Tibial artery (tissue), 4 donors: ENCODE measurements at regions of chr5 and their contacts with region 1.

Region 1: DNA sequence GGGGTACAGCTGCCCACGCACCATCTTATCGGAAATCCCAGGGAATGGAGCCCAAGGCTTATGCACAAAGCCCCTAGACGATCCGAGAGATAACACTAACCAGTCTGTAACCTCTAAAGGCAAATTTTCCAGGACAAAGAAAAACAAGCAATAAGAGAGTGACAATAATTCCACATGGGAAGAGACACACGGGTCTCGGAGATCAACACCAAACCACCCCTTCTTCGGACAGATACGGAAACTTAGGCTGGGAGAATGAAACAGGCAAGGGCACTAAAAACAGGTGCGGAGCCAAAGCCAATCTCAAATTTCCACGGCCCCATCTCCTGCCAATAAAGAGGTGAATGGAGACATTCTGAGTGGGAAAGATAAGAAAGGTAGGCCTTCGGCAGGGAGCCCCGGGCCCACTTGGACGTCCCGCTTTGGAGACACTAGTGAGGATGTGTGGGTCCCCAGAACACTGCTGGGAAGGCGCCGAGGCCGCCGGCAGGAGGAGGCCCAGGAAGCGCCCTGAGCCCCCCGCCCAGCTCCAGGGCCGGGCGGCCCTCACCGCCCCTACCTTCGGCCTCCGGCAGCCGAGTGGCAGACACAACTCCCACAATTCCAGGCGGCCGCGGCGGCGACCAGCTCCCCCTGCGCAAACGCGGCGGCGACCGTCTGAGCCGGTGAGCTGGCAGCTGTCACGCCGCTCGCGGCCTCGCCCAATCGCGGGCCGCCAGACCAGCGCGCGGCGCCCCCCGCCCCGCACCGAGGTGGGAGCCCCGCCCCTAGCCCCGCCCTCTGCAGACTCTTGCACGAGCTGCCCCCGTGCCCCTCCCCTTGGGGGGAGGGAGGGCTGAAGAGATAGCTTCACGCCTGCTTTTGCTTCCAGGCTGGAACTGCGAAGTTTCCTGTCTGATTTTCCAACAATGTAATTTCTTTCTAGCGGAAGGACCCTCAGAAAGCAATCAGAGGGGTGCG is at the start of gene SIL1:
- DNase-seq: peak; percentile 95 to 99
- H3K4me3 ChIP-seq: peak within 1 kb of the TSS; percentile 65 to 72
- H3K27ac ChIP-seq: peak within 1 kb of the TSS; percentile 79 to 94
- H3K4me1 ChIP-seq: peaks cover 0 to 16% (median 4%) of the 10 kb centered on the region in 4 donors
- H3K27me3 ChIP-seq: no peaks in the 10 kb centered on the region
- CTCF ChIP-seq: no peak

Region 2: DNA sequence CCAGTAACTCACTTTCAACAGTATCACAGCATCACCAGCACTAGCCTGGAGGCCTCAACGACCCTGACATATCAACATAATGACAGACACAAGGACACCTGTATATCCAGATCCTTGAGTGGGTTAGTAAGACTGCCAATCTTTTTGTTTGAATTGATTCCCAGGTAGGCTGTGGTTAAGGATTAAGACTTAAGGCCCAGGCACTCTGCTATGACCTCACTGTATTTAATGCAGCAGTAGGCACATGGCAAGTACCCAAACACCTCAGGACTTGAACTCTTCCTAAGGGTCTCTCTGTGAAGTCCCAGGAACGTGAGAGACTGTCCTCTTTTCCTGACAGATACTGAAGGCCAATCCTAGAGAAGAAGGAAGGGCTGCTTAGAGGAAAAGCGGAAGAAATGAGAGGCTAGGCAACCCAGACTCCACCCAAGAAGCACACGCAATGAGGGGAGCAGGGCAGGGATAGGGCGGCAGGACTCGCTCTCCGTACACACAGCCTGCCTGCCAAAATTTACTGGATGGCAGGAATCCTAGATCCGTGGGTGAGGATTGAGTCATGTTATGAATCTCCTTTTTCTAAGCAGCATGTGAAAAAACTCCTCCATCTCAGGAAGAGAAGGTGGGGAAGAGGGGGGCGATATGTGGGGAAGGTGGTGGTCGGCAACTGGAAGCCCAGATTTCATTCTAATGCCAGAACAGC is 93.3 kb before region 1 on chr5:
- intact Hi-C with region 1: loop called (anchors 10 kb)
- DNase-seq: peak; percentile 83 to 93
- H3K4me3 ChIP-seq: peak overlapping the region; percentile 3 to 23
- H3K27ac ChIP-seq: peak overlapping the region; percentile 73 to 87
- H3K4me1 ChIP-seq: peaks cover 0 to 60% (median 44%) of the 10 kb centered on the region in 4 donors
- H3K27me3 ChIP-seq: no peaks in the 10 kb centered on the region
- CTCF ChIP-seq: no peak

Region 3: GRCh38 chr5:139137702-139138101 is 60.3 kb before region 1 on chr5:
- intact Hi-C with region 1: loop called (anchors 5 kb)
- DNase-seq: no peak
- H3K4me3 ChIP-seq: no peak overlapping the region
- H3K27ac ChIP-seq: no peak overlapping the region
- H3K4me1 ChIP-seq: peaks cover 0 to 77% (median 53%) of the 10 kb centered on the region in 4 donors
- H3K27me3 ChIP-seq: no peaks in the 10 kb centered on the region
- CTCF ChIP-seq: no peak

Region 4: DNA sequence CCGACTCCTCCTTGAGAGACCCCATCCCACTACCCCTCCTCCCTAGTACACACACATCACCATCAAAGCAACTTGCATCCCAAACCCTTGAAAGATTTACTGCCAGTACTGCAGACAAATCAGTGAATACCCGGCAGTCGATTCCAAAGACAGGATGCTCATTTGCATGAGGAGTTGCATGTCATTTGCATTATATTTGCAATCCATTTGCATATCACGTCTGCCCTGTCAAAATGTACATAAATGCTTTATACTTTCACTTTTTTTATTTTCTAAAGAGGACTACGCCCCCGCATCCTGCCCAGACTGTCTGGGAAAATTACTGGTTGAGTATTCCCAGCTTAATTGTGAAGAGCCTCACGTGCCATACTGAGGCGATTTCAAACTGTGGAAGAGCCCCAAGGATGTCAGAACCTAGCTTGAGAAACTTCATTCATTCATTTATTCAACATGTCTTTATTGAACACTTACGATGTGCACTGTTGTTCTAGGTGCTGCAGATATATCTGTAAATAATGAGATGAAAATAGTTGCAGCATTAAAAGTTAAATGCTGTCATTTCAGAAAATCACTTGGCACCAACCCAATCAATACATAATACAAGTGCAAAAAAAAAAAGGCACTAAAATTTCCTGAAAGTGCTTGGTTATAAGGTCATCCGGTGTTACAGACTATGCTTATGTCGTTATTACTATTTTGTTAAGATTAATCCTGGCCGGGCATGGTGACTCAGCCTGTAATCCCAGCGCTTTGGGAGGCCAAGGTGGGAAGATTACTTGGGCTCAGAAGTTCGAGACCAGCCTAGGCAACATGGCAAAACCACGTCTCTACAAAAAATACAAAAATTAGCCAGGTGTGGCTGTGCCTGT is 17.4 kb after region 1 on chr5:
- intact Hi-C with region 1: no loop called
- DNase-seq: no peak
- H3K4me3 ChIP-seq: no peak overlapping the region
- H3K27ac ChIP-seq: no peak overlapping the region
- H3K4me1 ChIP-seq: peaks cover 0 to 4% (median 0%) of the 10 kb centered on the region in 4 donors
- H3K27me3 ChIP-seq: no peaks in the 10 kb centered on the region
- CTCF ChIP-seq: no peak

Region 5: DNA sequence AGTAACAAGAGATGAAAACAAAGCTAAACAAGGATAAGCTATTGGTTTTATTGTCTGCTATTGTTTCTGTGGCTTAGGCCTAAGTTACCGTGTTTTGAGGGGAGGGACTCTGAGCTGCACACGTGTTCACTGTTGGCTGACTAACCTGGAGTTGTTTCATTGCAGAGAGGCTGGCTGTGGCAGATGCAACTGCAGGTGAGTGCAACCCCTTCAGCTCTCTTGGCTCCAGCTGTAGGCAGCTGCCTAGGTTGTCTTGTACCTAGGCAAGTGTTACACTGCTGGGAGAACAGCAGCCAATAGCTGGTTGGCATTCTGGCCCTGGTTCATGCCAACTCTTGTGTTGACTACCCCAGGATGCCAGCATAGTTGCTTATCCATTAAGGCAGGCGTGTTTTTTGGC is 78.0 kb after region 1 on chr5:
- intact Hi-C with region 1: no loop called
- DNase-seq: no peak
- H3K4me3 ChIP-seq: no peak overlapping the region
- H3K27ac ChIP-seq: no peak overlapping the region
- H3K4me1 ChIP-seq: peaks cover 0 to 25% (median 14%) of the 10 kb centered on the region in 4 donors
- H3K27me3 ChIP-seq: no peaks in the 10 kb centered on the region
- CTCF ChIP-seq: no peak

Region 6: DNA sequence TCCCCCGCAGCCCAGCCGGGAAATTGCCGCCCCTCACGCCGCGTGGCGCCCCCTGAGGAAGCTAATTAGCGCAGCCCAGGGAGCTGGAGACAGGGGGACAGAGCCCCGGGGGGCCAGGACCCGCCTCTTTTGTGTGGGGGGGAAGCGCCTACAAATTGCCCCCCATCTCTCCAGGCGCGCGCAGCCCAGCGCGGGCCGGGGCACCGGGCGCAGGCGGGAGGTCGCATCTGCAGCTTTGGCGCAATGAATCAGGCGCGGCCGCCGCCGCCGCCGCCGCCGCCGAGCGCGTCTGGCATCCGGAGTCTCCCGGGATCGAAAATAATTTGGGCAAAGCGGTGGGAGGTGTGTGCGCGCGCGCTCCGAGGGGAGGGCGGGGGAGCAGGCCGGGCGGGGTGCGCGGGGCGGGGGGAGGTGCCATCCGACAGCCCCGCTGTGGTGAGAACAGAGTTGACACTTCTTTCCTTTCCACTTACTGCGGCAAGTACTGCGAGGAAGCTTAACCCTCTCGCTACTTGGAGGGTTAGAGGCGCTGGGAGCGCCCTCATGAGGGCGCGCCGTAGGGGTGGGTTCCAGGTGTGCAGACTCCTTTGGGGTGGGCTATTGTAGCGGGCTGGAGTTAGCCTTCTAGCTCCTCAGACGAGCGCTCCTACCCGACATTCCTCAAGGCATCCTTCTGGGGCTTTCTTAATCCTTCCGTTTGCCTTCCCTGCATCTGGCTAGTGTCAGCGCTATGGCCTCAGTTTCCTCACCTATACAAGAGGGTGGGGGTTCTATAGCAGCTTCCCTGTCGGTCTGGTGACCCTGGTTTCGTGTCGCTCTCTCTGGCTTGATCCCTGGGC is 513.3 kb after region 1 on chr5:
- intact Hi-C with region 1: loop called (anchors 10 kb)
- DNase-seq: peak in 1 of 2 donors; percentile 89
- H3K4me3 ChIP-seq: peak overlapping the region; percentile 53 to 67
- H3K27ac ChIP-seq: peak overlapping the region; percentile 75 to 81
- H3K4me1 ChIP-seq: peaks cover 0 to 42% (median 37%) of the 10 kb centered on the region in 4 donors
- H3K27me3 ChIP-seq: no peaks in the 10 kb centered on the region
- CTCF ChIP-seq: no peak